ENCODE measurements at regions of chr18 and their contacts with region 1.

Region 1: GRCh38 chr18:36203360-36203895 is 16.1 kb downstream of the MOCOS start:
- DNase-seq: no peak

Region 2: DNA sequence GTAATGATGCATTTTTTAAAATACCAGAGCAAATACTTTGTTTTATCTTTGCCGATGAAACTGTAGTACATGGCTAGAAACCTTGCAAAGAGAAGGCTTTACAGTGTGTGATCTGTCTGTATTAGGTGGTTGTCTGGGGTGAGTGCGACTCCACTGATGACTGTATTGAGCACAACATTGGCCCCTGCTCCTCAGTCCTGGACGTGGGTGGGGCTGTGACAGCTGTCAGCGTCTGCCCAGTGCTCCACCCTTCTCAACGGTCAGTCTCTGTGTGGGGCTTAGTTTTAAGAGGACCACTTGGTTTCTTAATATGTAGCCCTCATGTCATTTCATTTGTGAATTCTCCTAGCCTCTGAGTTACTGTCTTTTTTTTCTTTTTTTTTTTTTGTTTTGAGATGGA is 33.5 kb before region 1 on chr18:
- intact Hi-C with region 1: no loop called
- DNase-seq: no peak

Region 3: DNA sequence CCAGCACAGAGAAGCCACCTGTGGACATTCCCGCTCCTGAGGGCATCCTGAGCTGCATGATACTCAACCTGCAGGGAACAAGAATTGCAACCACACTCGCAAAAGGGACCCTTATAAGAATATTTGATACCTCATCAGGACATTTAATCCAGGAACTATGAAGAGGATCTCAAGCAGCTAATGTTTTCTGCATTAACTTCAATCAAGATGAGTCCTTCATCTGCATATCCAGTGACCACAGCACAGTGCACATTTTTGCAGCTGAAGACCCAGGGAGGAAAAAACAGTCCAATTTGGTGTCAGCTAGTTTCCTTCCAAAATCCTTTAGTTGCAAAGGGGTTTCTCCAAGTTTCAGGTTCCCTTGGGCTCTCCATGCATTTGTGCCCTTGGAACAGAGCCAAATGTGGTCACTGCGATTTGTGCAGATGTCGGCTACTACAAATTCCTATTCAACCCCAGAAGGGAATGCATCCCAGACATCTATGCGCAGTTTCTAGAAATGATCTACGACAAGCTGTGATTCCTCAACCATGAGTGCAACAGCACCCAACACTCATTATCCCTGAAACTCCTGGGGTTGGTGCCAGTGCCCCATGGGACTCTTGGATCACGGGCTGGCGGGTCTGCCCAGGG is 70.8 kb after region 1 on chr18:
- intact Hi-C with region 1: loop called (anchors 5 kb)
- DNase-seq: no peak

Region 4: DNA sequence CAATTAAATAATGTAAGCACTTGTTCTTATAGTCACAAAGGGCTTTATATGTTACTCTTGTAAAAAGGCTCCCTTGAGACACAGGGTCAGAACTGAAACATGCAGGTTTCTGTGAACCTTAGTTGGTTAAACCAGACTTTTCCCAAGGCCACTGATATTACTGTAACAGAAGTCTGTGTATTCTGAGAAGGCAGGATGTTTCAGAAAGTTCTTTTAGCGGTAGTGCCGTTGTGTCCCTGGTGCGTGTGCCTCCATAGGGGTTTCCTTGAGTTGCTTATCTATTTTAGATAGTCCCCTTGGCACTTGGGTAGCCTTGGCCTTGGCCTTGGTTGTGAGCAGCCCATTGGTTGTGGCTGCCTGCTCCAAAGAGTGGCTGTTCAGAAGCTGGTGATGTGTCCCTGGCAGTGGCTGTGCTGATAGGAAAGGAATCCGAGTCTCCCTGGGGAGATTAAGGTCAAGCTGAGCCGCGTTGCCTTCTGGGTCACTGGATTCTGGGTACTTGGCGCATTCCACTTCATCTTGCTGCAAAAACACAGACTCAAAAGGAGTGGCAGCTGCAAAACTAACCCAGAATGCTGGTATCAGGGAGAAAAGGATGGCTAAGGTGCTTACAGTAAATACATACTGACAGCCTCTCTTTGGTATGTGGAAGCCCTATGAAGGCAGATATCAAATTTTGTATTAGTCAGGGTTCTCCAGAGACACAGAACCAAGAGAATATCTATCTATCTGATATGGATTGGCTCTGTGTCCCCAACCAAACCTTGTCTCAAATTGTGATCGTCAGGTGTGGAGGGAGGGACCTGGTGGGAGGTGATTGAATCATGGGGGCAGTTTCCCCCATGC is 163.8 kb after region 1 on chr18:
- intact Hi-C with region 1: no loop called
- DNase-seq: peak; percentile 89

Measured in cardiac septum (tissue), 1 donor.